Common myeloid progenitor, CD34-positive (primary cell): ENCODE measurements at regions of chr12 and their contacts with region 1.

Region 1: GRCh38 chr12:32312049-32312670 is 87.2 kb upstream of the FGD4 start:
- DNase-seq: peak; percentile 88 to 93 (median 92)
- H3K4me3 ChIP-seq: peak overlapping the region in 1 of 7 experiments; percentile 16
- H3K27ac ChIP-seq: no peak overlapping the region
- H3K4me1 ChIP-seq: peaks cover 0 to 5% (median 1%) of the 10 kb centered on the region in 4 experiments
- H3K27me3 ChIP-seq: no peaks in the 10 kb centered on the region

Region 2: GRCh38 chr12:31651893-31652521 is 660.2 kb before region 1 on chr12:
- CTCF ChIA-PET with region 1: interaction called, 69 read pairs
- POLR2A ChIA-PET with region 1: no interaction called
- DNase-seq: no peak
- H3K4me3 ChIP-seq: peak overlapping the region in 1 of 7 experiments; percentile 38
- H3K27ac ChIP-seq: no peak overlapping the region
- H3K4me1 ChIP-seq: peaks cover 0 to 9% (median 4%) of the 10 kb centered on the region in 4 experiments
- H3K27me3 ChIP-seq: no peaks in the 10 kb centered on the region

Region 3: GRCh38 chr12:32062881-32063280 is 249.3 kb before region 1 on chr12:
- CTCF ChIA-PET with region 1: interaction called, 60 read pairs
- POLR2A ChIA-PET with region 1: no interaction called
- DNase-seq: peak in 2 of 3 donors; percentile 60 to 62
- H3K4me3 ChIP-seq: no peak overlapping the region
- H3K27ac ChIP-seq: no peak overlapping the region
- H3K4me1 ChIP-seq: peaks cover 2 to 11% (median 3%) of the 10 kb centered on the region in 4 experiments
- H3K27me3 ChIP-seq: no peaks in the 10 kb centered on the region

Region 4: GRCh38 chr12:32240831-32241230 is 71.3 kb before region 1 on chr12:
- CTCF ChIA-PET with region 1: no interaction called
- POLR2A ChIA-PET with region 1: no interaction called
- DNase-seq: no peak
- H3K4me3 ChIP-seq: no peak overlapping the region
- H3K27ac ChIP-seq: no peak overlapping the region
- H3K4me1 ChIP-seq: no peaks in the 10 kb centered on the region
- H3K27me3 ChIP-seq: no peaks in the 10 kb centered on the region

Region 5: DNA sequence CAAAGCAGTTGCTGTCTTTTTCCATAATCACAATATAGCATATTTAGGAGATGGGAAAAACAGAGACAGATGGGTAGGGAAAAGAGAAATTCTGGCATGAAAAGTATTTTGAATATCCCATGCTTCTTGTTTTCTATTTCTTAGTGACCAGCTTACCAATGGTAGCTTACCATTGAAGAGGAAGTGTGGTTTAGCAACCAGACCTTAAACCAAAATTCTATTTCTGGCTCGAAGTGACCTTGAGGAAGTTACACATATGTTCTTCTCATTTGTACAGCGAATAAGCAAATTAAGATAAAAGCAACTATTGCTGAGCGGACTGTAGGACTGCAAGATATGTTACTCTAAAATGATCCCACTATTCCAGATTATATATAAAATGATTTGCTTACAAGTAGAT is 170.1 kb after region 1 on chr12:
- CTCF ChIA-PET with region 1: no interaction called
- POLR2A ChIA-PET with region 1: no interaction called
- DNase-seq: peak; percentile 22 to 80 (median 76)
- H3K4me3 ChIP-seq: peak overlapping the region in 3 of 7 experiments; percentile 33 to 56 (median 54)
- H3K27ac ChIP-seq: no peak overlapping the region
- H3K4me1 ChIP-seq: peaks cover 9 to 52% (median 23%) of the 10 kb centered on the region in 4 experiments
- H3K27me3 ChIP-seq: no peaks in the 10 kb centered on the region